Panc1 (cell line): ENCODE measurements at regions of chr7 and their contacts with region 1.

Region 1: GRCh38 chr7:131945313-131945911 is 389.0 kb upstream of the PODXL start:
- DNase-seq: no peak
- ATAC-seq: peak; percentile 87
- H3K4me3 ChIP-seq: no peak overlapping the region; a peak in 1 of 4 replicates
- H3K27ac ChIP-seq: no peak overlapping the region
- H3K4me1 ChIP-seq: no peaks in the 10 kb centered on the region
- H3K27me3 ChIP-seq: peaks cover 16% of the 10 kb centered on the region; the same call in 1 of the 2 replicates
- CTCF ChIP-seq: peak; percentile 96

Region 2: GRCh38 chr7:132049462-132050304 is 104.3 kb after region 1 on chr7:
- CTCF ChIA-PET with region 1: interaction called, 4 read pairs
- POLR2A ChIA-PET with region 1: no interaction called
- in situ Hi-C with region 1: no loop called
- intact Hi-C with region 1: loop called (anchors 5 kb)
- DNase-seq: peak; percentile 46
- ATAC-seq: peak; percentile 80
- H3K4me3 ChIP-seq: peak overlapping the region in 1 of 2 experiments; percentile 35; a peak in 1 of 4 replicates
- H3K27ac ChIP-seq: no peak overlapping the region
- H3K4me1 ChIP-seq: no peaks in the 10 kb centered on the region
- H3K27me3 ChIP-seq: peaks cover 9% of the 10 kb centered on the region
- CTCF ChIP-seq: peak; percentile 85

Region 3: DNA sequence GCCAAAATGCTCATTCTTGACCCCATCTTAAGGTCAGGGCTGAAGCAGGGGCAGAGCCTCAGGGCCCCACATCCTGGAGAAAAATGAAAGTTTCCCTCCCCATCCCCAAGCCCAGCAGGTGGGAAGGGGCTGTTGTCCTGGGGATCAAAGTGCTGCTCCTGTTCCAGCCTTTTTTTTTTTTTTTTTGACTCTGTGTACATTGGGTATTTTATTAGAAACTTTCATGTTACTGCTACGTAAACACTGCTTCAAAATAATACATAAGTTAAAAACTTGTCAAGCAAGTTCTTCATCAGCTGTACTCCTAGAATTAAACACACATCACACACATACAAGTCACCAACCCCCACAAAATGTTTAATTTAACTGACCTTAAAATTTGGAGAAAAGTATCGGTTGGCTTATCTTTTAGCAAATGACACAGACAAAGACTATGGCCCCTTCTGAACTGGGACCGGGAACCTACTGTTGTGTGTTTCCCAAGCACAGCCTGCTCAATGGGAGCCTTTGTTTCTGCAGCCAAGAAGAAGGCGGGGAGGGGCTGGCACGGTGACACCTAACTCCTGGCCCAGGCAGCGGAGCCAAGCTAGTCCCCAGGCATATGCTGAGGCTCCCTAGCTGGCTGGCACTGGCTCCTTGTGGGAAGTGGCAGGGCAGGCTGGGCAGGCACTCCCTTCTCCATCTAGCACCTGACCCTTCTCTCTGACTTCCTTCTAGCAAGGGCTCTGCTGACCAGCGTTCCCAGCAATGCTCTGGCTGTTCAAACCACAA is 305.7 kb after region 1 on chr7:
- CTCF ChIA-PET with region 1: interaction called, 6 read pairs
- POLR2A ChIA-PET with region 1: no interaction called
- in situ Hi-C with region 1: no loop called
- intact Hi-C with region 1: loop called (anchors 10 kb)
- DNase-seq: no peak
- ATAC-seq: no peak
- H3K4me3 ChIP-seq: no peak overlapping the region
- H3K27ac ChIP-seq: no peak overlapping the region
- H3K4me1 ChIP-seq: no peaks in the 10 kb centered on the region
- H3K27me3 ChIP-seq: no peaks in the 10 kb centered on the region
- CTCF ChIP-seq: no peak

Region 4: DNA sequence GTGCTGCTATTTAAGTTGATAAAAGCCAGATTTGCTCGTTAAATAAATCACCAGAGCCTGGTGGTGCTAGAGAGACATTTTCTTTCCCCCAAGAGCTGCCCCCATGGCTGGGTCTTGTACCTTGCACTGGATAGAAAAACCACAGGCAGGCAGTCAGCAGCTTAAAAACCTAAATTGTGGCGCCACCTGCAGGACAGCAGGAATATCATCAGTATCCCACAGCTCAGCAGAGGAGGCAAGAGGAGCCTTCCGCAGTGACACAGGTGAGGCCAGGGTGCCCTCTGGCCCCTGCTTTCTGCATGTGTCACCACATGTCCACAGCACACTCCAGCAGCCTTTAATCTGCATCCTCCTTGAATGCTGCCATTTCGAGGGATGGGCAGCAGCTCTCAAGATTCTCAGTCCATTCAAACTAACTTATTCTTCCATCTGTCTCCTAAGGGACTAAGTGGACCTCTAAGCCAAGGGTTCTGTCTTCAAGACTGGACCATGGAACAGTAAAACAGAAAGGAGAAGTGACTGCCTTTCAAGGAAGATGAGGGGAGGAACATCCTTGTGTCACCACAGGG is 635.4 kb after region 1 on chr7:
- CTCF ChIA-PET with region 1: no interaction called
- POLR2A ChIA-PET with region 1: no interaction called
- in situ Hi-C with region 1: no loop called
- intact Hi-C with region 1: loop called (anchors 5 kb)
- DNase-seq: peak; percentile 60
- ATAC-seq: peak; percentile 90
- H3K4me3 ChIP-seq: no peak overlapping the region
- H3K27ac ChIP-seq: no peak overlapping the region
- H3K4me1 ChIP-seq: no peaks in the 10 kb centered on the region
- H3K27me3 ChIP-seq: peaks cover 31% of the 10 kb centered on the region
- CTCF ChIP-seq: peak; percentile 85

Region 5: DNA sequence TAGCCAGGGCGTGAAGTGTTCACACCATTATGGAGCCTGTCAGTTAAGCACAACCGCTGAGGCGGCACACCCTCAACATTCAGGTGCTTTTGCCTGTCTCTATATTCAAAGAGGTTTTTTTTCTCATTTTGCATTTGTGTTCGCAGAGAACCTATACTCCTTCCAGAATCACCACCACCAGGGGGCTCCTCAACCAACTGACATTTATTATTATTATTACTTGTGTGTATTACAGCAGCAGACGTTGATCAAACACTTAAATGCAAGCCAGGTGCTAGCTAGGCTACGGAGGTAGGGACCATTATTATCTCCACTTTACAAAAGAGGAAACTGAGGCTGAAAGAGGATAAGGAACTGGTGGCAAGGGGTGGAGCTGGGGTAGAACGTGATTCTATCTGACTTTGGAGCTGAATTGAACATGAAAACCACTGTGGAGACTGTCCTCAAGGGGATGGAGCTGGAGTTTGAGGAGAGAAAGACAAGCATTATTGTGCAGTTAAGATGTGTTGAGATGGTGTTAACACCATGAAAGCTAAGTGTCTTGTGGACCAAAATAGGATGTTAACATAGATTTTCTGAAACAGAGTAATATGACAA is 764.7 kb after region 1 on chr7:
- CTCF ChIA-PET with region 1: no interaction called
- POLR2A ChIA-PET with region 1: no interaction called
- in situ Hi-C with region 1: no loop called
- intact Hi-C with region 1: no loop called
- DNase-seq: no peak
- ATAC-seq: no peak
- H3K4me3 ChIP-seq: no peak overlapping the region
- H3K27ac ChIP-seq: no peak overlapping the region
- H3K4me1 ChIP-seq: no peaks in the 10 kb centered on the region
- H3K27me3 ChIP-seq: no peaks in the 10 kb centered on the region; the same call in 1 of the 2 replicates
- CTCF ChIP-seq: peak; percentile 67